Endothelial cell of umbilical vein (primary cell): ENCODE measurements at regions of chr7 and their contacts with region 1.

Region 1: DNA sequence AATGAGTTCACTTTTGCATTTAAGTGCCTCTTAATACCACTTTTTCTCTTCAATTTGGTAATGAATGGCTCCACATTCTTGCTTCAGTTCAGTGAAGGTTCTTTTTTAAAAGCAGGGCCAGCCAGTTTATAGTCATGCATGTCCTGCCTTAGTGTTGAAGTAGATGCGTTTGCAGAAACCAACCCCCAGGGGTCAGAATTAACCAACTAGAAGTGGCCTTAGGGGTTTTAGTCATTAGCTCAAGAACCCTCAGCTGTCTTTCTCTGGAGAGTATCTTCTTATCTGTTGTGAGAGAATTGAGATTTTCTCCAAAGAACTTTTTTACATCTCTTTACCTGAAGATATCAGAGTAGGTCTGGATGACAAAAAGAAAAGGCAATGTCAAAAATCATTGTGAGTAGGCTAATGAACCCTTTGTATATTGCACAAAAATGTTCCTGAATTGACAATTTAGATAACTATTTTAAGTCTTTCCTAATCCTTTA is 82.2 kb downstream of the PIK3CG start:
- DNase-seq: peak; percentile 83
- H3K4me3 ChIP-seq: no peak overlapping the region
- H3K27ac ChIP-seq: no peak overlapping the region
- H3K4me1 ChIP-seq: no peaks in the 10 kb centered on the region
- H3K27me3 ChIP-seq: peaks cover 5 to 8% of the 10 kb centered on the region in 2 experiments
- CTCF ChIP-seq: peak; percentile 64 to 69
- POLR2A ChIP-seq: no peak

Region 2: DNA sequence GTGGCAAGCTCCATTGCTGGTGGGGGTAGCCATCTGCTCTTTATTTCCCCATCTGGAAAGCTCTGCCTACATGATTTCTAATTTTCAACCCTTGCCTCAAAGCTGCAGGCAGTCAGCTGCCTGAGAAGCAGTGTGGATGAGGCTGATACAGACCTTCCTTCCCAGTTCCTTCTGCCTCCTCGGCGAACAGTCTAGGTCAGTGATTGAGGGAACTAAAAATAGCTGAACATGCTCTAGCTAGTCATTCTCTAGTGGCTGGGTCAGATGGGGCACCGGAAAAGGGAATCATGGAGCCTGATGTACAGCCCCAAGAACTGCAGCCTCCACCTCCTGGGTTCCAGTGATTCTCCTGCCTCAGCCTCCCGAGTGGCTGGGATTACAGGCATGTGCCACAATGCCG is 711.2 kb before region 1 on chr7:
- CTCF ChIA-PET with region 1: no interaction called
- POLR2A ChIA-PET with region 1: no interaction called
- dilution Hi-C with region 1: no loop called
- intact Hi-C with region 1: no loop called
- DNase-seq: no peak
- H3K4me3 ChIP-seq: no peak overlapping the region
- H3K27ac ChIP-seq: no peak overlapping the region
- H3K4me1 ChIP-seq: no peaks in the 10 kb centered on the region
- H3K27me3 ChIP-seq: no peaks in the 10 kb centered on the region
- CTCF ChIP-seq: no peak
- POLR2A ChIP-seq: no peak

Region 3: GRCh38 chr7:106959753-106960152 is 12.5 kb after region 1 on chr7:
- CTCF ChIA-PET with region 1: interaction called, 20 read pairs
- POLR2A ChIA-PET with region 1: no interaction called
- dilution Hi-C with region 1: no loop called
- intact Hi-C with region 1: no loop called
- DNase-seq: no peak
- H3K4me3 ChIP-seq: no peak overlapping the region
- H3K27ac ChIP-seq: no peak overlapping the region
- H3K4me1 ChIP-seq: no peaks in the 10 kb centered on the region
- H3K27me3 ChIP-seq: peaks cover 0 to 11% of the 10 kb centered on the region in 2 experiments
- CTCF ChIP-seq: peak; percentile 16 to 24
- POLR2A ChIP-seq: no peak

Region 4: DNA sequence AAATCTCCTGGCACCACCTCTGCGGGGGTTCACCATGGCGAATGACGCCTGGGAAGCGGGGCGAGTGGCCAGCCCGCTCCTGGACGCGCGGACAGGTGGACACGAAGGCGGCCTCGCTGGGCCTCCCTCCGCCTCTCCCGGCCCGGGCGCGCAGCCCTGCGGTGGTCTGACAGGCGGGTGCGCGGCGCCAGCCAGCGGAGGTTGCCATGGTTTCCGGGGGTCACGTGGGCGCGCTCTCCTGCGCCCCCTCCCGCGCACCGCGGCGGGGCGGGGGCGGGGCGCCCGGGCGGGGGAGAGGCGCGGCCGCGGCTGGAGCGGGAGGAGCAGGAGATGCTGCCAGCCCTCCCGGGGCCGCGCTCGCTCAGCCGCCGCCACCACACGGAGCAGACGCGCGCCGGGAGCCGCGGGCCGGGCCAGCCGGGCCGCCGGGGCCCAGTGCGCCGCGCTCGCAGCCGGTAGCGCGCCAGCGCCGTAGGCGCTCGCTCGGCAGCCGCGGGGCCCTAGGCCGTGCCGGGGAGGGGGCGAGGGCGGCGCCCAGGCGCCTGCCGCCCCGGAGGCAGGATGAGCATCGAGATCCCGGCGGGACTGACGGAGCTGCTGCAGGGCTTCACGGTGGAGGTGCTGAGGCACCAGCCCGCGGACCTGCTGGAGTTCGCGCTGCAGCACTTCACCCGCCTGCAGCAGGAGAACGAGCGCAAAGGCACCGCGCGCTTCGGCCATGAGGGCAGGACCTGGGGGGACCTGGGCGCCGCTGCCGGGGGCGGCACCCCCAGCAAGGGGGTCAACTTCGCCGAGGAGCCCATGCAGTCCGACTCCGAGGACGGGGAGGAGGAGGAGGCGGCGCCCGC is 97.3 kb after region 1 on chr7 and contains the start of gene PRKAR2B:
- CTCF ChIA-PET with region 1: interaction called, 7 read pairs
- POLR2A ChIA-PET with region 1: no interaction called
- dilution Hi-C with region 1: no loop called
- intact Hi-C with region 1: loop called (anchors 2 kb)
- DNase-seq: peak; percentile 83
- H3K4me3 ChIP-seq: peak within 1 kb of the TSS; percentile 95 to 97 (median 95)
- H3K27ac ChIP-seq: peak within 1 kb of the TSS; percentile 22
- H3K4me1 ChIP-seq: peaks cover 44% of the 10 kb centered on the region
- H3K27me3 ChIP-seq: no peaks in the 10 kb centered on the region
- CTCF ChIP-seq: peak in 1 of 2 donors; percentile 18
- POLR2A ChIP-seq: peak; percentile 58
- total RNA-seq, gene PRKAR2B: 37.6 and 39.8 TPM in 2 replicates

Region 5: GRCh38 chr7:107090457-107090856 is 143.2 kb after region 1 on chr7:
- CTCF ChIA-PET with region 1: interaction called, 10 read pairs
- POLR2A ChIA-PET with region 1: no interaction called
- dilution Hi-C with region 1: no loop called
- intact Hi-C with region 1: no loop called
- DNase-seq: peak; percentile 42
- H3K4me3 ChIP-seq: no peak overlapping the region
- H3K27ac ChIP-seq: no peak overlapping the region
- H3K4me1 ChIP-seq: peaks cover 17% of the 10 kb centered on the region
- H3K27me3 ChIP-seq: no peaks in the 10 kb centered on the region
- CTCF ChIP-seq: no peak
- POLR2A ChIP-seq: no peak

Region 6: DNA sequence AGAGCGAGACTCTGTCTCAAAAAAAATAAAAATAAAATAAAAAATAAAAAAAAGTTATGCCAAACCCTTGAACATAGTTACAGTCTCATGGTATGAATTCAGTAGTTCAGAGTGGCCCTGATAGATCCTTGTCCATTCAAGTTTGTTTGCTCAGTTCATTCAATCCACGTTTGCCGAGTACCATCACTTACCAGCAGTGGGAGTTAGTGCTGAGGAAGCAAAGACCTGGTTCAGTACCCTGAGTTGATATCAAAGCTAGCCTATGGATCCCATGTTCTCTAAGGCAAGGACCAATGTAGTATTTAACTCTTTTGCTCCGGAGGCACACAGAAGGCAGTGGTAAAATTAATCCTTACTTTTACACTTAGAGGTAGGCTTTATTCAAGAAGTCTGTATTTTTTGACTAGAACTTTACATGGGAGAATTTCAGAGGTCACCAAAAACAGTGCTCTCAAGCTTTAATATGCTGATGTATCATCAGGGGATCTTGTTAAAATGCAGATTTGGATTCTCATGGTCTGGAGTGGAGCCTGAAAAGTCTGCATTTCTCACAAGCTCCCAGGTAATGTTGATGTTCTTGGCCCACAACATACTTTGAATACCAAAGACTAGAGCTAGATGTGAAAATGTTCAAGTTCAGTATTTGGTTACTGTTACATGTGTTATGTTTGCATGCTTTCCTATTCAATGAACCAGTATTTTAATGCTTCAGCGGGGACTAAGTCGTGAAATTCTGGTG is 183.4 kb after region 1 on chr7:
- CTCF ChIA-PET with region 1: interaction called, 13 read pairs
- POLR2A ChIA-PET with region 1: no interaction called
- dilution Hi-C with region 1: no loop called
- intact Hi-C with region 1: no loop called
- DNase-seq: no peak
- H3K4me3 ChIP-seq: no peak overlapping the region
- H3K27ac ChIP-seq: no peak overlapping the region
- H3K4me1 ChIP-seq: no peaks in the 10 kb centered on the region
- H3K27me3 ChIP-seq: no peaks in the 10 kb centered on the region
- CTCF ChIP-seq: peak in 1 of 2 donors; percentile 10
- POLR2A ChIP-seq: no peak

Region 7: GRCh38 chr7:107168233-107169119 is 221.2 kb after region 1 on chr7 and contains the start of gene HBP1:
- CTCF ChIA-PET with region 1: interaction called, 25 read pairs
- POLR2A ChIA-PET with region 1: no interaction called
- dilution Hi-C with region 1: no loop called
- intact Hi-C with region 1: loop called (anchors 5 kb)
- DNase-seq: peak; percentile 100
- H3K4me3 ChIP-seq: peak within 1 kb of the TSS; percentile 81 to 97 (median 93)
- H3K27ac ChIP-seq: peak within 1 kb of the TSS; percentile 92
- H3K4me1 ChIP-seq: peaks cover 40% of the 10 kb centered on the region
- H3K27me3 ChIP-seq: no peaks in the 10 kb centered on the region
- CTCF ChIP-seq: no peak
- POLR2A ChIP-seq: peak; percentile 53
- total RNA-seq, gene HBP1: 50.1 and 63.4 TPM in 2 replicates